Activated T-helper 1 cell treated with anti-CD3 and anti-CD28 coated beads, Interleukin-12 subunit alpha, Interleukin-12 subunit beta, Interleukin-2, Interleukin-4 antibody, amounts not matched to agents 30 ng/mL and 10 ng/mL and 1 ng/mL, durations not matched to agents 14 hours and 24 hours and 36 hours (primary cell): ENCODE measurements at regions of chr4 and their contacts with region 1.

Region 1: DNA sequence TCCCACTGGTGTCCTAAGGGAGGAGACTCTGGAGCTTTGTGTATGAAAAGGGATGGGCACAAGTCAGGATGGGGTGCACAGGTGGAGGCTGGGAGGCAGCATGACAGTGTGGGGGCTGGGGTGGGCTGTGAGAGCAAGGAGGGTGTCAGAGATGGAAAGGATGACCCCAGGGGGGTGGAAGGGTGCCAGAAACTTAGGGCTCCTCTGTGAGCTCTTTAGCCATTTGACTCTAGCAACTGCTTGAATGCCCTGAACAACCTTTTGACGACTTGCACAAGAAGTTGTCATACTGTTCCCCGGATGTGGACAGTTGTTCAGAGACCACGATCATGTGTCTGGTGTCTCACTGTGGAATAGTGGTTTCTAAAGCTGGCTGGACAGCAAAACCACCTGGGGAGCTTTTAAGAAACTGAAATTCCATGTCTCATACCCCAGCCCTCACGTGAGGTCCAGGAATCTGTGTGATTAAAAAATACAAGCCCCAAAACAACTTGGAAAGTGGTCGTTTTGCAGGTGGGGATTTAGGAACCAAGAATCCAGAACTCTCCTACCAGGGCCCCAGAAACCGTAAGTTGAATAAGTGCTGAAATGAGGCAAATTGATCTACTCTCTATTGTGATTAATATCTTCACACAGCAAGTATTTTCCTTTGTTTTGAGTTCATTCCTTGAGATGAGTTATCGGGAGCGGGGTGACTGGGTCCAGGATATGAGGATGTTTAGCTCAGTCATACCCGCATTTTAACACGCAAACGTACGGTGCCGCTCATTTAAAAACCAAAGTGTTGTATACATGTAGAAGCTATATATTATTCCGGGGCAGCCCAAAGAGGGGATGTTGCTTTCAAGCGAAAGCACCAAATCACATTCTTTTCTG is 3.4 kb downstream of the RHOH start:
- DNase-seq: peak; percentile 76
- H3K4me3 Mint-ChIP-seq: peak overlapping the region; percentile 95
- H3K27ac Mint-ChIP-seq: peak overlapping the region; percentile 97
- H3K4me1 Mint-ChIP-seq: peaks cover 60% of the 10 kb centered on the region
- H3K27me3 Mint-ChIP-seq: no peaks in the 10 kb centered on the region

Region 2: DNA sequence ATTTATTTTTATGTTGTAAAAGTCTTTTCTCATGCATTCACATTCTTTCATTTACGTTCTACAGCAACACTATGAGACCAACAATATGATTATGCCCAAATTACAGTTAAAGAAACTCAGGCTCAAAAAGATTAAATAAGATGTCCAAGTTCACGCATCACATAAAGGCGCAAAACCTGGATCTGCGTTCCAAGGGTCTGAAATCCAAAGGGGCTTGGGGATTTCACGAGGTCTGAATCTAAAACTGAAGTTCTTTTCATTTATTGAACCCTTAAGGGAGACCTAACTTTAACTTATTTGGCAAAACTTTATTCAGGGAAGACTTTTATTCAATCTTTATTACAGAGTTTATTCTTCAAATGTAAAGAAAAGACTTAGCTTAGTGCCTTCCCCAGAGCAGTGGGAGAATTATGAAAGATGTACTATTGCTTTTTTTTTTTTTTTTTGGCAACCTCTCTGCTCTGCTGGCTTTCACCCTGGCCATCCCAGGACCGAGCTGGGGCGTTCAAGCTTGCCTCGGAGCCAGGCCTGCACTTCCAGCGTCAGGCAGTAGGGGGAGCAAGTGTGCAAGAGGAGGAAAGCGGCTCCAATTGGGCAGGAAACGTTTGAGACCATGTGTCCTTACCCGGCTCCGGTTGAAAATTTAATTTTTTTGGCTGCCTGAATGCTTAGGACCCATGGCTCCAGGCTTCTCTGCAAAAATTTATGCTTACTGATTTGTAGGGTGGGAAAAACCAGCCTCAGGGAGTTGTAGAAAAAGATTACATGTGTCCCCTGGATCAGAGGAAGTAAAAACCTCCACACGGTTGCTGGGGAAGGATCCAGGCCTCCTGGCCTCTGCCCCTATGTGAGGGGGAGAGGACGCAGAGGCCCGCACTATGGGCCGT is 1880.5 kb before region 1 on chr4:
- intact Hi-C with region 1: loop called (anchors 10 kb)
- DNase-seq: peak; percentile 83
- H3K4me3 Mint-ChIP-seq: peak overlapping the region; percentile 48
- H3K27ac Mint-ChIP-seq: peak overlapping the region; percentile 79
- H3K4me1 Mint-ChIP-seq: peaks cover 55% of the 10 kb centered on the region
- H3K27me3 Mint-ChIP-seq: peaks cover 5% of the 10 kb centered on the region

Region 3: DNA sequence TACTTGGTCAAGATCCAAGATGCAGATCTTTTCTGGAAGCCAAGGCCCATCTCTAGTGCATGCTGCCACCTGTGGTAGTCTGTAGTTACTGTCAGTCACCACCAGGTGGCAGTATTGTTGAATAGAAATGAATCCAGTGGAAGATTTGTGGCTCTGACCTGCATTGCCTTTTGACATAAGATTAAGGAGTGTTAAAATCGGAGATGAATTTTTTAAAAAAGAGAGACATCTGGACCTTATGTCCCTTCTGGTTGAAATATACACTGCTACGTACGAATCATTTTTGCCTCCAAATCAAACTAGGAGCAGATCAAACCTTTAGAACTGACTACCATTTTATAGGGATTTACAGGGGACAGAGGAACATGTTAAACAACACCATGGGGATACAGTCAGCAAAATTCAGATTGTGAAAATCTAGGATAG is 50.3 kb before region 1 on chr4:
- intact Hi-C with region 1: loop called (anchors 1 kb)
- DNase-seq: peak; percentile 67
- H3K4me3 Mint-ChIP-seq: no peak overlapping the region
- H3K27ac Mint-ChIP-seq: peak overlapping the region; percentile 48
- H3K4me1 Mint-ChIP-seq: no peaks in the 10 kb centered on the region
- H3K27me3 Mint-ChIP-seq: no peaks in the 10 kb centered on the region

Region 4: GRCh38 chr4:40255393-40256281 is 55.4 kb after region 1 on chr4:
- intact Hi-C with region 1: loop called (anchors 1 kb)
- DNase-seq: no peak
- H3K4me3 Mint-ChIP-seq: peak overlapping the region; percentile 42
- H3K27ac Mint-ChIP-seq: peak overlapping the region; percentile 93
- H3K4me1 Mint-ChIP-seq: peaks cover 67% of the 10 kb centered on the region
- H3K27me3 Mint-ChIP-seq: no peaks in the 10 kb centered on the region

Region 5: GRCh38 chr4:40316782-40317635 is 116.8 kb after region 1 on chr4:
- intact Hi-C with region 1: loop called (anchors 1 kb)
- DNase-seq: peak; percentile 59
- H3K4me3 Mint-ChIP-seq: peak overlapping the region; percentile 83
- H3K27ac Mint-ChIP-seq: peak overlapping the region; percentile 99
- H3K4me1 Mint-ChIP-seq: peaks cover 58% of the 10 kb centered on the region
- H3K27me3 Mint-ChIP-seq: no peaks in the 10 kb centered on the region

Region 6: DNA sequence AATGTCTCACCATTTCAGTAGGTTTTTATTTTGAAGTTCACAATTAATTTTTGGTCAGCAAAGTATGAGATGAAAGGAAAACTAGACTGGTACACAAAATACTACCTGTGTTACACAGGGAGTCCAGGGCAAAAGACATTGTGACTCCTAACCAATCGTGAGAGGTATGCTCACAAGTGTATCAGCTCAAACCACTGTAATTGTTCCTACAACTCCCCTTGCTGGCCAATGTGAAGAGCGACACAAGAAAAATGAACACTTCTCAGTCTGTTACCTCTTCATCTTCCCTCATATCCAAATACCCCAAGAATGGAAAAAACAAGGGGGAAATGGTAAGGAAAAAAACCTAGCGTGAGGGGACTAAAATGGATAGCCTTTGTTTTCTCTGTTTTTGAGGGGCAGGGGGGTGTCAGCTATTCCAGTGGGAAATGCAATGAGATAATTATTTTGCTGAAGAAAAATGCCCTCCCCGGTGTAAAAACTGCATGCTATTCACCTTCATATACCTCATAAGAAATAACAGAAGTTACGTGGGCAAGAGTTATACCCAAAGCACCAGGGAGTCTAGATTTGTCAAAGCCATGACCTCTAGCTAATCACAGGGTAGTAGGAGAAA is 518.9 kb after region 1 on chr4:
- intact Hi-C with region 1: loop called (anchors 5 kb)
- DNase-seq: no peak
- H3K4me3 Mint-ChIP-seq: no peak overlapping the region
- H3K27ac Mint-ChIP-seq: peak overlapping the region; percentile 5
- H3K4me1 Mint-ChIP-seq: peaks cover 36% of the 10 kb centered on the region
- H3K27me3 Mint-ChIP-seq: no peaks in the 10 kb centered on the region

Region 7: DNA sequence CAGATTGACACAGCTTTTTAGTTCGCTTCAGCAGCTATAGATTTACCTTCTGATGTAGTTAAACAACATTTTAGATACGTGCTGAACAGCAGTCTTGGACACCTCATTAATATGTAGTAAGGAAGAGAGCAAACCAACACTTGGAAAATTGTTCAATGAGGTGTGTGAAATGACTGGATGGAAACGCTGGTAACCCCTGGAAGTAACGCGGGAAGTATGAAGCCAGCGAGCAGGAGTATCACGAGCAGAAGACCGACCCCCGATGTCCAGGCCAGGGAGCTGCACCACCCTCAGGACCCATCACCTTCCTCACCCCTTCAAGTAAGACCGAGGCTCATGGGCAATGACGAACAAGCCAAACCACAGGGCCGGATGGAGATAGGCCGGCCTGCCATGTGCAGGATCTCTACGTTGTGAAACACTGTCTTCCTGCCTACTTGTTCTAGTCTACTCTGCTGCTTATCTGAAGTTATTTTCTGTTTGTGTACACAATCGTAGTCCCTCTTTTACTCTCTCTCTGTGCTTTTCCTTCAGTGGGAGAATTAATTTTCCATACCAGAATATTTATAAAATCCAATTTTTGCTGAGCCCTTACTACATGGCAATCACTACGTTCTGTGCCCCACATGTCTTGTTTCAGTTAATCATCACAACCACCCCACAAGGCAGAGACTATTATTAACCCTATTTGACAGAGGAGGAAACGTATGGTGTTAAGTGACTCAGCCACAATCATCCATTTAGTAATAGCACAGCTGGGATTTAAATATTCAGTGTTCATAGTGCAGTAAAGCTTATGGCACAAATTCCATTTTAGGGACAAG is 792.4 kb after region 1 on chr4:
- intact Hi-C with region 1: no loop called
- DNase-seq: no peak
- H3K4me3 Mint-ChIP-seq: no peak overlapping the region
- H3K27ac Mint-ChIP-seq: no peak overlapping the region
- H3K4me1 Mint-ChIP-seq: no peaks in the 10 kb centered on the region
- H3K27me3 Mint-ChIP-seq: peaks cover 4% of the 10 kb centered on the region